Activated CD8-positive, alpha-beta memory T cell treated with anti-CD3 and anti-CD28 coated beads, Interleukin-2, amount 10 ng/mL, durations not matched to agents 7 days and 5 days (primary cell): ENCODE measurements at regions of chr3 and their contacts with region 1.

Region 1: GRCh38 chr3:5002174-5002870 is 23.1 kb downstream of the BHLHE40 start:
- DNase-seq: peak; percentile 92
- ATAC-seq: peak; percentile 77
- H3K4me3 Mint-ChIP-seq: peak overlapping the region; percentile 31
- H3K27ac Mint-ChIP-seq: peak overlapping the region; percentile 90
- H3K4me1 Mint-ChIP-seq: peaks cover 80% of the 10 kb centered on the region
- H3K27me3 Mint-ChIP-seq: no peaks in the 10 kb centered on the region

Region 2: GRCh38 chr3:4828279-4829030 is 173.9 kb before region 1 on chr3:
- CTCF ChIA-PET with region 1: no interaction called
- DNase-seq: no peak
- ATAC-seq: no peak
- H3K4me3 Mint-ChIP-seq: no peak overlapping the region
- H3K27ac Mint-ChIP-seq: peak overlapping the region; percentile 99
- H3K4me1 Mint-ChIP-seq: peaks cover 94% of the 10 kb centered on the region
- H3K27me3 Mint-ChIP-seq: no peaks in the 10 kb centered on the region

Region 3: GRCh38 chr3:4928277-4928789 is 74.0 kb before region 1 on chr3:
- CTCF ChIA-PET with region 1: no interaction called
- DNase-seq: peak; percentile 58
- ATAC-seq: peak; percentile 27
- H3K4me3 Mint-ChIP-seq: no peak overlapping the region
- H3K27ac Mint-ChIP-seq: peak overlapping the region; percentile 53
- H3K4me1 Mint-ChIP-seq: peaks cover 25% of the 10 kb centered on the region
- H3K27me3 Mint-ChIP-seq: no peaks in the 10 kb centered on the region

Region 4: GRCh38 chr3:4986782-4987537 is 15.4 kb before region 1 on chr3:
- CTCF ChIA-PET with region 1: interaction called, 58 read pairs
- DNase-seq: peak; percentile 92
- ATAC-seq: peak; percentile 75
- H3K4me3 Mint-ChIP-seq: peak overlapping the region; percentile 93
- H3K27ac Mint-ChIP-seq: peak overlapping the region; percentile 92
- H3K4me1 Mint-ChIP-seq: peaks cover 69% of the 10 kb centered on the region
- H3K27me3 Mint-ChIP-seq: no peaks in the 10 kb centered on the region